MCF 10A (cell line): ENCODE measurements at regions of chr20 and their contacts with region 1.

Region 1: GRCh38 chr20:10596726-10597125 is 77.1 kb downstream of the JAG1 start:
- DNase-seq: peak; percentile 88
- H3K4me3 Mint-ChIP-seq: peak overlapping the region; percentile 2
- H3K27ac Mint-ChIP-seq: peak overlapping the region; percentile 5
- H3K4me1 Mint-ChIP-seq: peaks cover 33% of the 10 kb centered on the region
- H3K27me3 Mint-ChIP-seq: no peaks in the 10 kb centered on the region
- CTCF ChIP-seq: no peak

Region 2: GRCh38 chr20:10558635-10559187 is 38.0 kb before region 1 on chr20:
- CTCF ChIA-PET with region 1: interaction called, 8 read pairs
- POLR2A ChIA-PET with region 1: interaction called, 22 read pairs
- intact Hi-C with region 1: loop called (anchors 5 kb)
- DNase-seq: peak; percentile 90
- H3K4me3 Mint-ChIP-seq: peak overlapping the region; percentile 18
- H3K27ac Mint-ChIP-seq: peak overlapping the region; percentile 68
- H3K4me1 Mint-ChIP-seq: peaks cover 26% of the 10 kb centered on the region
- H3K27me3 Mint-ChIP-seq: no peaks in the 10 kb centered on the region
- CTCF ChIP-seq: no peak

Region 3: GRCh38 chr20:10584371-10584770 is 12.4 kb before region 1 on chr20:
- CTCF ChIA-PET with region 1: interaction called, 7 read pairs
- POLR2A ChIA-PET with region 1: interaction called, 39 read pairs
- intact Hi-C with region 1: no loop called
- DNase-seq: no peak
- H3K4me3 Mint-ChIP-seq: no peak overlapping the region
- H3K27ac Mint-ChIP-seq: no peak overlapping the region
- H3K4me1 Mint-ChIP-seq: peaks cover 19% of the 10 kb centered on the region
- H3K27me3 Mint-ChIP-seq: no peaks in the 10 kb centered on the region
- CTCF ChIP-seq: no peak

Region 4: DNA sequence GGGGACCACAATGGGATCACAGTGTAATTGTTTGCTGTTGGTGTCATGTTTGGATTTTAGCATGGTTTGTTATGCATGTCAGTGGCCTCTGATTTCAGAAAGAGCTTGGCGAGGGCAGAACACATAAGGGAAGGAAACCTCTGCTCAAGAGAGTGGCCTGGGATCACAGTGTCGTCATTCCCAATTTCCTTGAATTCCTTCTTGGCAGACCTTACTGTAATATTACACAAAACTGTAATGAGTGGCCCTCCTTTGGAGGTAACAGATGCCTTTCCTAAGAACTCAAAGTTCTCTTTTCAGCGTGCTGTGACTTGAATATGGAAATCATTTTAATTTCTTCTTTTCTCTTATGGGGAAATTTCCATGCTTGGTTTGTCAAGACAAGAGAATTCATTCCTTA is 30.2 kb after region 1 on chr20:
- CTCF ChIA-PET with region 1: interaction called, 4 read pairs
- POLR2A ChIA-PET with region 1: interaction called, 38 read pairs
- intact Hi-C with region 1: no loop called
- DNase-seq: peak; percentile 86
- H3K4me3 Mint-ChIP-seq: no peak overlapping the region
- H3K27ac Mint-ChIP-seq: peak overlapping the region; percentile 27
- H3K4me1 Mint-ChIP-seq: peaks cover 25% of the 10 kb centered on the region
- H3K27me3 Mint-ChIP-seq: no peaks in the 10 kb centered on the region
- CTCF ChIP-seq: no peak

Region 5: GRCh38 chr20:10667077-10667401 is 70.3 kb after region 1 on chr20:
- CTCF ChIA-PET with region 1: interaction called, 9 read pairs
- POLR2A ChIA-PET with region 1: interaction called, 170 read pairs
- intact Hi-C with region 1: no loop called
- DNase-seq: peak; percentile 78
- H3K4me3 Mint-ChIP-seq: peak overlapping the region; percentile 33
- H3K27ac Mint-ChIP-seq: peak overlapping the region; percentile 68
- H3K4me1 Mint-ChIP-seq: peaks cover 46% of the 10 kb centered on the region
- H3K27me3 Mint-ChIP-seq: no peaks in the 10 kb centered on the region
- CTCF ChIP-seq: no peak